ENCODE measurements at regions of chr19 and their contacts with region 1.

Region 1: DNA sequence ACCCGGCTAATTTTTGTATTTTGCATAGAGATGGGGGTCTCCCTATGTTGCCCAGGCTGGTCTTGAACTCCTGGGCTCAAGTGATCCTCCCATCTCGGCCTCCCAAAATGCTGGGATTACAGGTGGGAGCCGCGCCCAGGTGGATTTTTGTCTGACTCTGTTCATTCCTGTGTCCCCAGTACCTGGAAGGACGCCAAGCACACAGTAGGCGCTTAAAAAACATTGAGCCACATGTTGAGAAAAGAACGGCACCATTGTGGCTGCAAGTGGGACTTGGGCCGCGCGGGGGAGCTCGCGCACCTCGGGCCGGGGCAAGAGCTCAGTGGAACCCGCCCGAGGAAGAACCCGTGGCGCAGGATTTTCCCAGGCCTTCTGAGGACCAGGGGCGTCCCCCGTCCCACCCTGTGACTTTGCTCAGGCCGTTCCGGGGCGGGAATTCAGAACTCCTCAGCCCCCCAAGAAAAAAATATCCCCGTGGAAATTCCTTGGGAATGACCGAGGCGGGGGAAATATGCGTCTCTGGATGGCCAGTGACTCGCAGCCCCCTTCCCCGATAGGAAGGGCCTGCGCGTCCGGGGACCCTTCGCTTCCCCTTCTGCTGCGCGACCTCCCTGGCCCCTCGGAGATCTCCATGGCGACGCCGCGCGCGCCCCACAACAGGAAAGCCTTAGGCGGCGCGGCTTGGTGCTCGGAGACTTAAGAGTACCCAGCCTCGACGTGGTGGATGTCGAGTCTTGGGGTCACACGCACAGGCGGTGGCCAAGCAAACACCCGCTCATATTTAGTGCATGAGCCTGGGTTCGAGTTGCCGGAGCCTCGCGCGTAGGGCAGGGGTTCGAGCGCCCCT is 1.4 kb upstream of the ICAM1 start:
- DNase-seq: peak; percentile 93
- ATAC-seq: peak; percentile 69
- H3K4me3 Mint-ChIP-seq: peak overlapping the region; percentile 68
- H3K27ac Mint-ChIP-seq: no peak overlapping the region
- H3K4me1 Mint-ChIP-seq: 0 out of 2 replicates have a peak, but pooled peaks cover 4% of the 10 kb centered on the region
- H3K27me3 Mint-ChIP-seq: peaks cover 46% of the 10 kb centered on the region
- CTCF ChIP-seq: peak; percentile 84

Region 2: DNA sequence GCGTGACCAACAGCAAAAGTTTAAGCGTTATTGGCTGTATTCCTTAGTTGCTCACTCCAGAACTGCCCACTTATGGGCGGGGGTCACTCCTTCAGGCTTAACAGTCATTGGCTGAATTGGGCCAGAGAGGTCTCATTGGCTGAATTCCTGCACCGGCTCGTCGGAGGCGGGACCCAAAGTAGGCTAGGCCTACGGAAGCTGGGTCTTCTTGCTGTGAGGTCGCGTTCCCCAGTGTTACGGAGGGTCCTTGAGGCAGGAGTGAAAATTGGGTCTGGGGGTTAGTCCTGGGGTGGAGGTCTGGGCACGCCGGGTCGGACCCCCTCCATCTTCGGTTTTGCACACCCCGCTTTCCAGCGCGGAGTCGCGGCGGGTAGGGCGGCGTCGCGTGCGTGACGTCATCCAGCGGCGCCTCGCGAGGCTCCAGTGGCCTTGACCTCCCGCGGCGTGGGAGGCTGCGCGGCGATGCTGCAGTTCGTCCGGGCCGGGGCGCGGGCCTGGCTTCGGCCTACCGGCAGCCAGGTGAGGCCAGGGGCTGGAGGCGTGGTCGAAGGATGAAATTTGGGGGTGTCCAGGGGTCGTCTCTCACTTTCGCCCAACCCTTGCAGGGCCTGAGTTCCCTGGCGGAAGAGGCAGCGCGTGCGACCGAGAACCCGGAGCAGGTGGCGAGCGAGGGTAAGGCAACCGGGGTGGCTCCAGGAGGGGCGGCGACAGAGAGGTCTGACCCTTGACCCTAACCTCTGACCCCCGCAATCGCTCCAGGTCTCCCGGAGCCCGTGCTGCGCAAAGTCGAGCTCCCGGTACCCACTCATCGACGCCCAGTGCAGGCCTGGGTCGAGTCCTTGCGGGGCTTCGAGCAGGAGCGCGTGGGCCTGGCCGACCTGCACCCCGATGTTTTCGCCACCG is 17.5 kb before region 1 on chr19 and contains the start of gene MRPL4:
- CTCF ChIA-PET with region 1: interaction called, 107 read pairs
- POLR2A ChIA-PET with region 1: interaction called, 10 read pairs
- DNase-seq: peak; percentile 96
- ATAC-seq: peak; percentile 98
- H3K4me3 Mint-ChIP-seq: peak within 1 kb of the TSS; percentile 95
- H3K27ac Mint-ChIP-seq: peak within 1 kb of the TSS; percentile 96
- H3K4me1 Mint-ChIP-seq: peaks cover 5% of the 10 kb centered on the region
- H3K27me3 Mint-ChIP-seq: peaks cover 2% of the 10 kb centered on the region; the same call in 1 of the 2 replicates
- CTCF ChIP-seq: no peak
- total RNA-seq, gene MRPL4: 109 to 112 TPM (median 110 TPM) in 3 replicates

Region 3: GRCh38 chr19:10292206-10292788 is 22.7 kb after region 1 on chr19:
- CTCF ChIA-PET with region 1: interaction called, 180 read pairs
- POLR2A ChIA-PET with region 1: interaction called, 10 read pairs
- DNase-seq: peak; percentile 99
- ATAC-seq: peak; percentile 73
- H3K4me3 Mint-ChIP-seq: peak overlapping the region; percentile 82
- H3K27ac Mint-ChIP-seq: no peak overlapping the region
- H3K4me1 Mint-ChIP-seq: peaks cover 39% of the 10 kb centered on the region
- H3K27me3 Mint-ChIP-seq: peaks cover 98% of the 10 kb centered on the region
- CTCF ChIP-seq: no peak

Region 4: DNA sequence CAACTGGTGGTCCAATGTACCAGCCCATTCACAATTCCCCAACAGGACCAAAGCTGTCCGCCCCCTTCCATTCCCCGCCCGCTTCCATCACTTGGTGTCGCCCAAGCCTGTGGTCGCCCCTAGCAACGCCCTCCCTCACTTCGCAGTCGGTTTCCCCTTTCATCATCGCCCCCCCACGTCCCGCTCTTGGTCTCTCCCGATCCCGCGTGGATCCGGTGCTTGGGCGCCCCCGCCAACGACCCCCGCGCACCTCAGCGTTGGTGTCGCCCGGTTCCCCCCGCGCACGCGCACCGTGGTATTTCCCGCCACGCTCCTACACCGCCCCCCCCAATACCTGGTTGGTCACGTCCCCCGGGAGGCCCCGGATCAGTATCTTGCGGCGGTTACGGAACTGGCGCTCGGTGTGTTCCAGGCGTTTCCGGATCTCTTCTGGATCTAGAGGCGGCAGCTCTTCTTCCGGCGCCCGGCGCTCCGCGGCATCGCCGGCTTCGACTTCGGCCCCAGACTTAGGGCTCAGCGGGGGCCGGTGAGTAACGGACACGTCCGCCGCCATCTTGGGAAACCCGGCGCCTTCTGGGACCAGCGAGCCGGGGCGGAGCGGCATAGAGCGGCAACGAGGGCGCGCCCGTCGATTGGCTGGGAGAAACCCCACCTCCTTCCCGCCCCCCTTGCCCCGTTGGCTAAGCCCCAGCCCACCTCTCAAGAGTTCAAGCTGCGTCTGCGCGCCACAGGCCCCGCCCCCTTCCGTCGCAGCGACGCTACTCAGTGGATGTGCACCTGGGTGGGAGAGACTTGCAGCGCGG is 63.6 kb after region 1 on chr19 and contains the start of gene RAVER1:
- CTCF ChIA-PET with region 1: interaction called, 55 read pairs
- POLR2A ChIA-PET with region 1: interaction called, 5 read pairs
- DNase-seq: peak; percentile 98
- ATAC-seq: peak; percentile 91
- H3K4me3 Mint-ChIP-seq: peak within 1 kb of the TSS; percentile 93
- H3K27ac Mint-ChIP-seq: peak within 1 kb of the TSS; percentile 90
- H3K4me1 Mint-ChIP-seq: peaks cover 16% of the 10 kb centered on the region
- H3K27me3 Mint-ChIP-seq: peaks cover 10% of the 10 kb centered on the region
- CTCF ChIP-seq: no peak
- total RNA-seq, gene RAVER1: 85.8 to 87.4 TPM (median 86.9 TPM) in 3 replicates

Region 5: DNA sequence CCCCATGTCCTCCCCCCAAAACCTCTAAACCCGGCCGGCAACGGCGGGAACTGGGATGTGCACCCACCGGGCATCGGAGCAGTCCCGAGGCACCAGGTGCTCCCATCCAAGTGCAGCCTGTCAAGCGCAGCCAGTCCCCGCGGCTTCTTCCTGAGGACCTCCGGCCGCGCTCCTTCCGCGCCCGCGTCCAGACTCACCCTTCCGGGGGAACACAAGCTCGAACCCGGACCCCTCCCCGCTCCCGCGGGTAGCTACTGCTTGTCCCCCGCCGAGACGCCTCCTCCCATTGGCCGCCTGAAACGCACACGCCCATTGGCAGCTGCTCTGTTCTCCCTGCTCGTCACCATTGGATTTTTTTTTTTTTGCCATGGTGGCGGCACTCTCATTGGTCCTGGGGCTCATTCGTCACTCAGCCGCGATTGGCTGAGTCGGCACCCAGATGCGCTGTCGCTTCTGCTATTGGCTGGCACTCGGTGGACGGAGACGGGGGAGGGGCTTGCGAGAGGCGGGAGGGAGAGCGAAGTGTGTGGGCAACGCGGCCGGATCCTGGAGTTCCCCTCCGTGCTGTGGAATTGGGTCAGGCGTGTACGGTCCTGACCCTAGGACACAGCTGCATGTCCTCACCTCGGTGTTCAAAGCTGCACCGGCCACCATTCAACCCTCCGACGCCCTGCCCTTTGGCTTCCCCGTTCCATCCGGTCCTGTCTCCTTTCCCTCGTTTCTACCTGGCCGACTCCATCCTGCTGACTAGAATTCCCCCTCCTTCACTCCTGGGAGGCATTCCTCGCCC is 111.0 kb after region 1 on chr19 and contains the start of gene TYK2:
- CTCF ChIA-PET with region 1: interaction called, 163 read pairs
- POLR2A ChIA-PET with region 1: interaction called, 11 read pairs
- DNase-seq: peak; percentile 93
- ATAC-seq: peak; percentile 96
- H3K4me3 Mint-ChIP-seq: peak within 1 kb of the TSS; percentile 88
- H3K27ac Mint-ChIP-seq: peak within 1 kb of the TSS; percentile 97
- H3K4me1 Mint-ChIP-seq: peaks cover 9% of the 10 kb centered on the region
- H3K27me3 Mint-ChIP-seq: peaks cover 3% of the 10 kb centered on the region; the same call in 1 of the 2 replicates
- CTCF ChIP-seq: no peak
- total RNA-seq, gene TYK2: 63.8 to 66.4 TPM (median 65.1 TPM) in 3 replicates

Measured in WTC11 (cell line).